Activated T-helper 1 cell treated with anti-CD3 and anti-CD28 coated beads, Interleukin-12 subunit alpha, Interleukin-12 subunit beta, Interleukin-2, Interleukin-4 antibody, amounts not matched to agents 30 ng/mL and 10 ng/mL and 1 ng/mL, durations not matched to agents 14 hours and 24 hours and 36 hours (primary cell): ENCODE measurements at regions of chr9 and their contacts with region 1.

Region 1: DNA sequence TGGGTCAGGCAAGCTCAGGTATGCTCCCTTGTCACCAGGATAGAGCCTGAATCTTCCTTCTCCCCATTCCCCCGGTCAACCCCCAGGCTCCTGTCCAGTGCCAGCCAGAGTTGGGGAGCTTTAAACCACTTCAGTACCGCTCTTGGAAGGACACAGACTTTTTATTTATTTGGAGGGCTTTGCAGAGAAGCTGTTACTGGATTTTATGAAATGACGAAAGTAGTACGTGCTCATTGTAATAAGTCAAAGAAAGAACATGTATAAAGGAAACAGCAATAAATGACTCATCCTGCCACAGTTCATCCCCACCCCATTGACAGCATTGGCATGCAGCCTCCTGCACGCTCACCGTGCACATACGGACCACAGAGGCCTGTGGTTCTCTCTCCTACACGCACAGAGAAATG is 230.3 kb downstream of the AUH start:
- DNase-seq: peak; percentile 70
- H3K4me3 Mint-ChIP-seq: peak overlapping the region; percentile 63
- H3K27ac Mint-ChIP-seq: peak overlapping the region; percentile 96
- H3K4me1 Mint-ChIP-seq: peaks cover 42% of the 10 kb centered on the region
- H3K27me3 Mint-ChIP-seq: no peaks in the 10 kb centered on the region

Region 2: DNA sequence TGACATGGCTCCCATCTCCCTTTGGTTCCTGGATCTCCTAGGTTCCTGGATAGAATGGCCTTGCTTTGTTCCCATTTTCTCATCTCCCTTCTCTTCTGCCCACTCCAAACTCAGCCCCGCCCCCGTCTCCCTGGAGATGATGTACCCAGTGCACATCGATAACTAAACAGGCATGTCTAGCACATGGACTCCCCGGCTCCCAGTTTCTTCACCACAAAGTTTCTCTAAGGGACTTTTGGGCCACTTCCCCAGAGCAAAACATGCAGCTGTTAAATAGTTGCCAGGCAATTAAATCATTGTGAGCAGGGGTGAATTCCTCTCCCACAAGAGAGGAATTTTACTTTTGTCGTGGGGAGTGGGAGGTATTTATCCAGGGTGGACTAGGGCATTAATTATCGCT is 1267.6 kb before region 1 on chr9:
- intact Hi-C with region 1: no loop called
- DNase-seq: no peak
- H3K4me3 Mint-ChIP-seq: no peak overlapping the region
- H3K27ac Mint-ChIP-seq: no peak overlapping the region
- H3K4me1 Mint-ChIP-seq: peaks cover 9% of the 10 kb centered on the region
- H3K27me3 Mint-ChIP-seq: peaks cover 5% of the 10 kb centered on the region

Region 3: GRCh38 chr9:90972057-90972456 is 159.4 kb before region 1 on chr9:
- intact Hi-C with region 1: no loop called
- DNase-seq: no peak
- H3K4me3 Mint-ChIP-seq: no peak overlapping the region
- H3K27ac Mint-ChIP-seq: no peak overlapping the region
- H3K4me1 Mint-ChIP-seq: peaks cover 16% of the 10 kb centered on the region
- H3K27me3 Mint-ChIP-seq: peaks cover 3% of the 10 kb centered on the region

Region 4: GRCh38 chr9:91071185-91071990 is 60.0 kb before region 1 on chr9:
- intact Hi-C with region 1: loop called (anchors 1 kb)
- DNase-seq: peak; percentile 35
- H3K4me3 Mint-ChIP-seq: peak overlapping the region; percentile 68
- H3K27ac Mint-ChIP-seq: peak overlapping the region; percentile 96
- H3K4me1 Mint-ChIP-seq: peaks cover 17% of the 10 kb centered on the region
- H3K27me3 Mint-ChIP-seq: peaks cover 2% of the 10 kb centered on the region

Region 5: GRCh38 chr9:91101611-91102168 is 29.7 kb before region 1 on chr9:
- intact Hi-C with region 1: loop called (anchors 1 kb)
- DNase-seq: peak; percentile 85
- H3K4me3 Mint-ChIP-seq: peak overlapping the region; percentile 53
- H3K27ac Mint-ChIP-seq: peak overlapping the region; percentile 85
- H3K4me1 Mint-ChIP-seq: peaks cover 72% of the 10 kb centered on the region
- H3K27me3 Mint-ChIP-seq: peaks cover 8% of the 10 kb centered on the region

Region 6: DNA sequence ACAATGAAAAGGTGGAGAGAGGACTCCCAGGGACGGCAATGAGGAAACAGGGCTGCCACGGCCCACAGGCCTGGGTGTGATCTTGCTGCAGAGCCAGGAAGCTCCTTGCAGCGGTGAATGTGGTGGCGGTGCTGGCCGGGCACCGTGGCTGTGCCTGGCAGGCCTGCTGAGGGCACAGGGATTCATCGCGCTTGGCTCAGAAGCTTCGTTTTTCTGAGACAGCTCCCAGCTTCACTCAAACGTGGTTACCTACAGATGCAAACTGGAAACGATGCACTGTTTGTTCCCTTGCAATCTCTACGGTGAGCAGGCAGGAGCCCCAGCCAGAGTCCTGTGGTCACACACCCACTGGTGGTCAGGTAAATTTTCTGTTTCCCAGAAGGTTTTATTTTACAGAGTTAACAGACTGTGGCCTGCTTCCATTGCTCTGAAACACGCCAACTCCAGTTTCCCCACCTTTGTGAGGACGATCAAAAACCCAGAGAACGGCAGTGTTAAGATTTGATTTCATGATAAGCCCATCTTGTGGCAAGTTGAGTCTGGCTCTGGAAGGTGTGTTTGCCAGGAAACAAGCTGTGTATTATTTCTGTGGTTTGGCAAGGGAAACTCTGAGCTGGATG is 46.3 kb after region 1 on chr9:
- intact Hi-C with region 1: loop called (anchors 1 kb)
- DNase-seq: no peak
- H3K4me3 Mint-ChIP-seq: peak overlapping the region; percentile 35
- H3K27ac Mint-ChIP-seq: peak overlapping the region; percentile 96
- H3K4me1 Mint-ChIP-seq: peaks cover 71% of the 10 kb centered on the region
- H3K27me3 Mint-ChIP-seq: no peaks in the 10 kb centered on the region

Region 7: GRCh38 chr9:92048924-92049625 is 917.6 kb after region 1 on chr9:
- intact Hi-C with region 1: loop called (anchors 5 kb)
- DNase-seq: no peak
- H3K4me3 Mint-ChIP-seq: no peak overlapping the region
- H3K27ac Mint-ChIP-seq: no peak overlapping the region
- H3K4me1 Mint-ChIP-seq: no peaks in the 10 kb centered on the region
- H3K27me3 Mint-ChIP-seq: no peaks in the 10 kb centered on the region